Prostate gland (tissue), 2 donors: ENCODE measurements at regions of chr22 and their contacts with region 1.

Region 1: DNA sequence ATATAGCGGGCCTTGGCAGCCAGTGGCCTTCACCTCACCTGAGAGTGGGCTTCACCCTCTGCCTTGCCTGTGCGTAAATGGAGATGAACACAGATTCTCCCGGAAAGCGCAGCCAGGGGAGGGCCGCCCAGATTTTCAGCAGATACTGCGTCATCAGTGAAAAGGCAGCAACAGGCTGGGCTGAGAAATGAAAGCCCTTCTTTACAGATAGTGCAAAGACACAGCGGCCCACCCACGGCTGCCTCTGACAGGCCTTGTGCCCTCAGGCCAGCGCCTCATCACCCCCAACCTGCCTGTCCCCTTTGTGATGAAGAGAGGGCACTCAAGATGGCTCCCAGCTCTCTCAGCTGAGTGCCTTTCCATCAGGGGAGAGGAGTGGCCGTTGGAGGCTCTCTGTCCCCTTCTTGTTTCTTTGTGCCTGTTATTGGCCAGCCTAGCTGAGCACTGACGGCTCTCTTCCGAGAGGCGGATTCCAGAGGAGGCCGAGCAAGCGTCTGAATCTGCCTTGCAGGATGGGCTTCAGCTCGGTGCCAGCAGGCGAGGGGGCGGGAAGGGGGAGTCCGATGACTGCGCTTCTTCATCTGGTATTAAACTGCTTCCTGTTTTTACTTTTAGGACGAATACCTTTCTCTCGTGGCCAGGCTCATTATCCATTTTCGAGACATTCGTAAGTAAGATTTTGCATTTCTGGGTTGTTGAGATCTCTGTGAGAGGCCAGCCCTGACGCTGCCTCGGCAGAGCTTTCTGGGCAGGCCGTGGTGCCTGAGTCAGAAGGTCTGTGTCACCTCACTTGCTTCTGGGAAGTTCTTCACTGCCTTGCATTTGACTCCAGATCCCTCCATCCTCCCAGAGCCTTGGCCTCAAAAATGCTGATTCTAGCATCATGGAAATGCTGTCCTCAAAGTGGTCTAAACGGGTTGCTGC is 43.7 kb downstream of the MED15 start:
- DNase-seq: no peak
- H3K4me3 ChIP-seq: no peak overlapping the region
- H3K27ac ChIP-seq: peak overlapping the region; percentile 68 to 70
- H3K4me1 ChIP-seq: peaks cover 6% of the 10 kb centered on the region
- H3K27me3 ChIP-seq: no peaks in the 10 kb centered on the region
- CTCF ChIP-seq: no peak
- POLR2A ChIP-seq: no peak

Region 2: DNA sequence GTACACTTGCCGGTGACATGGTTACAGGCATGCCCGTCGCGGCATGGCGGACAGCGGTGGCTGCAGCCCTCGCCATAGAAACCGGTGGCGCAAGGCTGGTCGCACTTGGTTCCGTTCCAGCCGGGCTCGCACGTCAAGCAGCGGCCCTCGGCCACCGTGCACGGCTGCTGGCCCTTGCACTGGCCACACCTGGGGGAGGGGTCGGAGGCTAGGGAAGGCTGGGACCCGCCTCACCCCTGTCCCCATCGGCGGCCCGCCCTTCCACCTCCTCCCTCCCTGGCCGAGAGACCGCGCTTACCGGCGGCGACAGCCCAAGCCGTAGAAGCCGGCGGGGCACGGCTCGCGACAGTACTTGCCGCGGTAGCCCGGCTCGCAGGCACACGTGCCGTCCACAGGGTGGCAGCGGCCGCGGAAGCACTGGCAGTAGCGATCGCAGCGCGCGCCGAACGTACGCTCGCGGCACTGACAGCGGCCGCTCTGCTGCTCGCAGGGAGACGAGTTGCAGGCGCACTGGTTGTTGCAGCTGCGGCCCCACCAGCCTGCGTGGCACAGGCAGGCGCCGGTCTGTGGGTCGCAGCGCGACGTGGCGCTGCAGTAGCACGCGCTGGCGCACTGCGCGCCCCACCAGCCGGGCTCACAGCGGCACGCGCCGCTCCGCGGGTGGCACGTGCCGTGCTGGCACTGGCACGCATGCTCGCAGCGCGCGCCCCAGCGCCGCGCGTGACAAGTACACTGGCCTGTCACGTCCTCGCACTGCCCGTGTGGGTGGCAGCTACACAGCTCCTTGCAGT is 120.2 kb before region 1 on chr22:
- intact Hi-C with region 1: loop called (anchors 10 kb)
- DNase-seq: peak; percentile 33
- H3K4me3 ChIP-seq: peak overlapping the region in 1 of 2 donors; percentile 29
- H3K27ac ChIP-seq: no peak overlapping the region
- H3K4me1 ChIP-seq: peaks cover 10% of the 10 kb centered on the region
- H3K27me3 ChIP-seq: no peaks in the 10 kb centered on the region
- CTCF ChIP-seq: peak in 2 of 4 experiments; percentile 44 to 48
- POLR2A ChIP-seq: no peak

Region 3: DNA sequence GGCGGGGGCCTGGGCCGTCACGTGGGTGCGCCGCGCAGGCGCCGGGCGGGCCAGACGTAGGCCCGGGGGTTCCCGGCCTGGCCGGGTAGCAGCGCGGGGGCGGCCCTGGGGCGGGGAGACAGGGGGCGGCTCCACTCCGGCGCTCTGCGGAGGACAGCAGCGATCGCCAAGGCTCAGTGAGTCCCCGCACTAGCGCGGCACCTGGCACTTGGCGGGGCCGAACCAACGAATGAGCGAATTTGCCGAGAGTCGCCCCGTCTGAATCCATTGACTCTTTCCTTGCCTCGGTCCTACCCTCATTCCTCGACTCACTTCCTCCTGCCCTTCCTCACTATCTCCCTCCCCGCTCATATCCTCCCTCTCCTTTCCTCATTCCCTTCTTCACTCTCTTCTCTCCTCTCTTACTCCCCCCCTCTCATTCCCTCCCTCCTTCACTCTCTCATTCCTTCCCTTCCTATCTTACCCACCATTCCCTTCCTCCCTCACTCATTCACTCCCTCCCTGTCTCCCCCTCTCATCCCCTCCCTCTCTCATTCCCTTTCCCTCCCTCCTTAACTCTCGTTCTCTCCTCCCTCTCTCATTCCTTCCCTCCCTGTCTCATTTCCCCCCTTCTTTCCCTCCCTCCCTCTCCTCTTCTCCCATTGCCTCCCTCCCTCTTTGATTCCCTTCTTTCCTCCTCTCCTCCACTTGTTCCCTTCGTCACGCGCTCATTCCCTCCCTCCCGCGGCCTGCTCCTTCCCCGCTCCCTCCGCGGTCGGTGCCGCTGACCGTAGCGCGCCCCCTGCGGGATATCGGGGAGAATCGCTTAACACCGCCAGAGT is 55.0 kb before region 1 on chr22:
- intact Hi-C with region 1: no loop called
- DNase-seq: peak; percentile 91
- H3K4me3 ChIP-seq: peak overlapping the region; percentile 58 to 81
- H3K27ac ChIP-seq: peak overlapping the region; percentile 97
- H3K4me1 ChIP-seq: no peaks in the 10 kb centered on the region
- H3K27me3 ChIP-seq: no peaks in the 10 kb centered on the region
- CTCF ChIP-seq: peak; percentile 75 to 92 (median 92)
- POLR2A ChIP-seq: peak; percentile 90

Region 4: GRCh38 chr22:20507253-20508066 is 43.6 kb before region 1 on chr22 and contains the start of gene MED15:
- intact Hi-C with region 1: loop called (anchors 5 kb)
- DNase-seq: peak; percentile 86
- H3K4me3 ChIP-seq: peak within 1 kb of the TSS; percentile 65 to 92
- H3K27ac ChIP-seq: peak within 1 kb of the TSS; percentile 93 to 94
- H3K4me1 ChIP-seq: peaks cover 15% of the 10 kb centered on the region
- H3K27me3 ChIP-seq: no peaks in the 10 kb centered on the region
- CTCF ChIP-seq: peak in 1 of 4 experiments; percentile 14
- POLR2A ChIP-seq: peak; percentile 87
- total RNA-seq, gene MED15: 43.2 to 87.1 TPM

Region 5: DNA sequence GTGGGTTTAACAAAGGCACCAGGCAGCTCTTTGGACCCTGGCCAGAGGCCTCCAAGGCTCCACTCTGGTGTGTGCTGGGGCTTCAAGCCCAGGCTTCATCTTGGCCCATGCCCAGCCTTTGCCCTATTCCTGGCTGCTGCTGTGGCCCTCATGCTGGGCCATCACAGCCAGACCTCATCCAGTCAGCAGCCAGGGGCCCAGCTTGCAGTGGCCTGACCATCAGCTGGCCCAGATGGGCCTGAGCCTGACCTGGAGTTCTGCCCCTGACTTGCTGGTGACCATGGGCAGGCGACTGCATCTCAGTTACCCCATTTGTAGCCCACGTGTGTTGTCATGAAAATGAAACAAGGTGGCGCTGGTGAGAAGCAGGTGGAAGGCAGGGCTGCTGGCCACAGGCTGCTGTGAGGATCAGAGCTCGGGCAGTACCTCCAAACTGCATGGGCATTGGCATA is 32.4 kb after region 1 on chr22:
- intact Hi-C with region 1: no loop called
- DNase-seq: no peak
- H3K4me3 ChIP-seq: no peak overlapping the region
- H3K27ac ChIP-seq: no peak overlapping the region
- H3K4me1 ChIP-seq: no peaks in the 10 kb centered on the region
- H3K27me3 ChIP-seq: no peaks in the 10 kb centered on the region
- CTCF ChIP-seq: no peak
- POLR2A ChIP-seq: no peak